CD4-positive, alpha-beta memory T cell (primary cell): ENCODE measurements at regions of chr16 and their contacts with region 1.

Region 1: DNA sequence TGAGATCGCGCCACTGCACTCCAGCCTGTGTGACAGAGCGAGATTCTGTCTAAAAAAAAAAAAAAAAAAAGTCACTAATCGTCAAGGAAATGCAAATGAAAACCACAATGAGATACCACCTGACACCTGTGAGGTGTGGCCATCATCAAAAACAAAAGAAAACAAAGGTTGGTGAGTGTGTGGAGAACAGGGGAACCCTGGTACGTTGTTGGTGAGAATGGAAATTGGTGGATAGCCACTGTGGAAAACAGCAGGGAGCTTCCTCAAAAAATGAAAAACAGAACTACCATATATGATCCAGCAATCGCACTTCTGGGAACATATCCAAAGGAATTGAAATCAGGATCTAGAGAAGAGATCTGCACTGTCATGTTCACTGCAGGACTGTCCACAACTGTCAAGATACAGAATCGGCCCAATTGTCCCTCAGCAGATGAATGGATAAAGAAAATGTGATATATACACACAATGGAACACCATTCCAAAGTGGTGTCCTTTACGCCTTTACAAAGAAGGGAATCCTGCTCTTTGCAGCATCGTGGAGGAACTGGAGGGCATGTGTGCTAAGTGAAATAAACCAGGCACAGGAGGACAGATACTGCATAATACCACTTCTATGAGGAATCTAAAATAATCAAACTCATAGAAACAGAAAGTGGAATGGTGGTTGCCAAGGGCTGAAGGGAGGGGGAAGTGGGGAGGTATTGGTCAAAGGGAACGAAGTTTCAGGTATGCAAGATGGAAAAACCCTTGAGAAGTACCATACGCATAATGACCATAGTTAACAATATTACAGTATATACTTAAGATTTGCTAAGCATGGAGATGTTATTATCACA is 63.5 kb upstream of the PLCG2 start:
- DNase-seq: peak; percentile 73 to 82 (median 75)
- H3K4me3 ChIP-seq: peak overlapping the region in 1 of 2 donors; percentile 48
- H3K4me3 Mint-ChIP-seq: peak overlapping the region; percentile 74 to 91 (median 84)
- H3K27ac ChIP-seq: peak overlapping the region; percentile 45
- H3K27ac Mint-ChIP-seq: peak overlapping the region; percentile 86 to 97 (median 95)
- H3K4me1 ChIP-seq: peaks cover 49% of the 10 kb centered on the region
- H3K4me1 Mint-ChIP-seq: peaks cover 37 to 54% (median 47%) of the 10 kb centered on the region in 4 donors
- H3K27me3 ChIP-seq: no peaks in the 10 kb centered on the region
- H3K27me3 Mint-ChIP-seq: no peaks in the 10 kb centered on the region

Region 2: DNA sequence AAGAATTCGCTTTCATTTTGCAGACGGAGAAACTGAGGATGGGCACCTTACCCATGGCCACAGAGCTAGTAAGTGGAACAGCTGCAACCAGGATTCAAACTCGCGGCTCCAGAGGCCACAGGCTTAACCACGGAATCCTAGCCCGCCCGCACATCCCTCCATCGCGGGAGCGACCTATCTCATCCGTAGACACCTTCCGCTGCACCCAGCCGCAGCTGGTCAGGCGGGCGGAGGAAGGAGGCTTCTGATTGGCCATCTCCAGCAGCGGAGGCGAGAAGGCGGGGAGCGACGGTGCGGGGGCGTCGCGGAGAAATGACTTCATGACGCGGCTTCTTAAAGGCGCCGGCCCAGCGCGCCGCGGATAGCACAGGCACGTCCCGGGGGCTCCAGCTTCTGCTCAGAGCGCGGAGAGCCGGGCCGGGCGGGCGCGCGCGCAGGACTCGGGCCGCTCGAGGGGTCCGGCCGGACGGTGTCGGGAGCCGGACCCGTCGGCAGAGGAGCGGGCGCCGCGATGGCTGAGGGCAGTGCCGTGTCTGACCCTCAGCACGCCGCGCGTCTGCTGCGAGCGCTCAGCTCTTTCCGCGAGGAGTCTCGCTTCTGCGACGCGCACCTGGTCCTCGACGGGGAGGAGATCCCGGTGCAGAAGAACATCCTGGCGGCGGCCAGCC is 400.8 kb before region 1 on chr16 and contains the start of gene GAN:
- CTCF ChIA-PET with region 1: interaction called, 5 read pairs
- POLR2A ChIA-PET with region 1: interaction called, 3 read pairs
- intact Hi-C with region 1: loop called (anchors 5 kb)
- DNase-seq: peak; percentile 93 to 95 (median 94)
- H3K4me3 ChIP-seq: peak within 1 kb of the TSS; percentile 86 to 93
- H3K4me3 Mint-ChIP-seq: peak within 1 kb of the TSS; percentile 92 to 99 (median 97)
- H3K27ac ChIP-seq: peak within 1 kb of the TSS; percentile 33
- H3K27ac Mint-ChIP-seq: peak within 1 kb of the TSS; percentile 89 to 98 (median 94)
- H3K4me1 ChIP-seq: peaks cover 25% of the 10 kb centered on the region
- H3K4me1 Mint-ChIP-seq: peaks cover 33 to 53% (median 44%) of the 10 kb centered on the region in 4 donors
- H3K27me3 ChIP-seq: no peaks in the 10 kb centered on the region
- H3K27me3 Mint-ChIP-seq: no peaks in the 10 kb centered on the region
- total RNA-seq, gene GAN: 9.5 to 10.8 TPM

Region 3: DNA sequence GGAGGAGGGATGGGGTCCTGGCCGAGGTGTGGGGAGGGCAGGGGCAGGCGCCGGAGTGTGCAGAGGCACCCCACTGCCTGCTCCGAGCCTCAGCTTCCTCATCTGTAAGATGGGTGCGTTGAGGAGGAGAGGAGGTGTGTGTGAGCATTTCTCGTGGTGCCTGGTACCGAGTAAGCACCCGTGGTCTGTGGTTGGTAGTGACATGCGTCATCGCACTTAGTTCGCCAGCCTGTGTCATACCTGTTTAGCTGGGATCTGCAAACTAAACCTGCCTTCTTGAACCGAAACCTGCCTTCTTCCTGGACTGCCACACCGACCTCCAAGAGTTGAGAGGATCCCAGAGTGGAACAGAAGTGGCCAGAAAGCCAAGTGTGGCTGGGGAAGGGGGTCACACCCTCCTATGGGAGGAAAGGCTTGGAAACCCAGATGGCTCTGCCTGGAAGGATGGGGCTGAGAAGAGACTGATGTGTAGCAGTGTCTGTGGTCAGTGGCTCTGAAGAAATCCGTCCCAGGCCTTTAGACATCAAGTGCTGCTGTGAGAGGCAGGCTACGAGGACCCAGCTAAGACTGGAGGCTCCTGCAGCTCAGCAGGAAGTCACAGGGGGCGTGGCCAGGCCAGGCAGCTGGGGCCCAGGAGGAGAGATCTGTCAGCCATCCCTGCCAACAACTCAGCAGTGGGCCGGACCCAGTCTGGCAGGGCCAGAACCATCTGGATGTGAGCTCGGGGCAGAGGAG is 99.1 kb before region 1 on chr16:
- CTCF ChIA-PET with region 1: interaction called, 38 read pairs
- POLR2A ChIA-PET with region 1: interaction called, 18 read pairs
- intact Hi-C with region 1: no loop called
- DNase-seq: peak; percentile 75 to 89 (median 84)
- H3K4me3 ChIP-seq: peak overlapping the region; percentile 10 to 53
- H3K4me3 Mint-ChIP-seq: peak overlapping the region; percentile 63 to 82 (median 76)
- H3K27ac ChIP-seq: peak overlapping the region; percentile 75
- H3K27ac Mint-ChIP-seq: peak overlapping the region in 2 of 7 donors; percentile 96 to 97
- H3K4me1 ChIP-seq: peaks cover 25% of the 10 kb centered on the region
- H3K4me1 Mint-ChIP-seq: peaks cover 9 to 19% (median 12%) of the 10 kb centered on the region in 4 donors
- H3K27me3 ChIP-seq: no peaks in the 10 kb centered on the region
- H3K27me3 Mint-ChIP-seq: no peaks in the 10 kb centered on the region

Region 4: GRCh38 chr16:81632392-81633146 is 83.0 kb before region 1 on chr16:
- CTCF ChIA-PET with region 1: interaction called, 5 read pairs
- POLR2A ChIA-PET with region 1: interaction called, 19 read pairs
- intact Hi-C with region 1: no loop called
- DNase-seq: peak; percentile 75 to 93 (median 80)
- H3K4me3 ChIP-seq: peak overlapping the region in 1 of 2 donors; percentile 21
- H3K4me3 Mint-ChIP-seq: peak overlapping the region; percentile 38 to 83 (median 67)
- H3K27ac ChIP-seq: peak overlapping the region; percentile 60
- H3K27ac Mint-ChIP-seq: peak overlapping the region; percentile 93 to 97 (median 95)
- H3K4me1 ChIP-seq: peaks cover 36% of the 10 kb centered on the region
- H3K4me1 Mint-ChIP-seq: peaks cover 18 to 43% (median 36%) of the 10 kb centered on the region in 4 donors
- H3K27me3 ChIP-seq: no peaks in the 10 kb centered on the region
- H3K27me3 Mint-ChIP-seq: no peaks in the 10 kb centered on the region

Region 5: DNA sequence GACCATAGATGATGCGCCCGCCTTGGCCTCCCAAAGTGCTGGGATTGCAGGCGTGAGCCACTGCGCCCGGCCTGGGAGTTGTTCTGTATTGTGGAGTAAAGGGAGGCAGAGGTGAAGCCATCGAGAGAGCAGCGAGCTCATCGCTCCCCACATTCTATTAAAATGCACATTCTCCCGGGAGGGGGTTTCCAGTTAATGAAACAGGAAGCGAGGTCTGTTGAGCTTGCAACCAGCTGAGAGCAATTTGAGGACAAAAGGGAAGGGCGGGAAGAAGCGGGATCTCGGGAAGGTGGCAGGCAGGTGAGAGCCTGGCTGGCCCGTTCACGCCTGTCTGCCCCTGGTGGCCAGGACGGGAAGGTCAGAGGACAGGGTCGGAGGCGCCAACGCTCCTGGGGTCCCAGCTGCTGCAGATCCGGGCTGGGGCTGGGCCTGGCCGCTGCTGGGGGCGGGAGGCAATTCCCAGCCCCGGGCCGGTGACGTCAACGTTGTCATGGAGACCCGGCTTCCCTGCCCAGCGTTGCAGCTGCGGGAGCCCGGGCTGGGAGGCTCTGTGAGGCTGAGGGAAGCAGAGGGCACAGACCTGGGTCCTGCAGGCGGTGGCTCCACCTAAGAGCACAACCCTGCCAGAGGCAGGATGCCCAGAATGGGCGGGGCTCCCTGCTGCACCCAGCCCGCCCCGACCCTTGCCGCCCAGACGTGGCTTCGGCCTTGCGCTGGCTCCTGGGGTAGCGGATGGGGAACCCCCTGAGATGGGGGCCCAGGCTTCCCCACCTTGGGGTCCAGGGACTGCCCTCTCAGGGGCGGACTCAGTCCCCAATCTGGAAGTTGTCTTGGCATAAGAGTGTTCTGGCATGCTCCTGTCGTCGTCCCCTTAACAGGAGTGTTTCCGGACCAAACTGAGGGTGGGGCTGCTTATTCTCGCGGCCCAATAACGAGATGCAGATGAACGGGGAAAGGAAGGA is 14.8 kb after region 1 on chr16:
- CTCF ChIA-PET with region 1: interaction called, 25 read pairs
- POLR2A ChIA-PET with region 1: interaction called, 19 read pairs
- intact Hi-C with region 1: no loop called
- DNase-seq: peak; percentile 42 to 73 (median 58)
- H3K4me3 ChIP-seq: peak overlapping the region; percentile 11 to 25
- H3K4me3 Mint-ChIP-seq: peak overlapping the region; percentile 85 to 93 (median 88)
- H3K27ac ChIP-seq: peak overlapping the region; percentile 65
- H3K27ac Mint-ChIP-seq: peak overlapping the region; percentile 78 to 97 (median 93)
- H3K4me1 ChIP-seq: peaks cover 12% of the 10 kb centered on the region
- H3K4me1 Mint-ChIP-seq: peaks cover 8 to 25% (median 17%) of the 10 kb centered on the region in 4 donors
- H3K27me3 ChIP-seq: no peaks in the 10 kb centered on the region
- H3K27me3 Mint-ChIP-seq: no peaks in the 10 kb centered on the region